Right ventricle myocardium superior (tissue), 1 donor: ENCODE measurements at regions of chr3 and their contacts with region 1.

Region 1: DNA sequence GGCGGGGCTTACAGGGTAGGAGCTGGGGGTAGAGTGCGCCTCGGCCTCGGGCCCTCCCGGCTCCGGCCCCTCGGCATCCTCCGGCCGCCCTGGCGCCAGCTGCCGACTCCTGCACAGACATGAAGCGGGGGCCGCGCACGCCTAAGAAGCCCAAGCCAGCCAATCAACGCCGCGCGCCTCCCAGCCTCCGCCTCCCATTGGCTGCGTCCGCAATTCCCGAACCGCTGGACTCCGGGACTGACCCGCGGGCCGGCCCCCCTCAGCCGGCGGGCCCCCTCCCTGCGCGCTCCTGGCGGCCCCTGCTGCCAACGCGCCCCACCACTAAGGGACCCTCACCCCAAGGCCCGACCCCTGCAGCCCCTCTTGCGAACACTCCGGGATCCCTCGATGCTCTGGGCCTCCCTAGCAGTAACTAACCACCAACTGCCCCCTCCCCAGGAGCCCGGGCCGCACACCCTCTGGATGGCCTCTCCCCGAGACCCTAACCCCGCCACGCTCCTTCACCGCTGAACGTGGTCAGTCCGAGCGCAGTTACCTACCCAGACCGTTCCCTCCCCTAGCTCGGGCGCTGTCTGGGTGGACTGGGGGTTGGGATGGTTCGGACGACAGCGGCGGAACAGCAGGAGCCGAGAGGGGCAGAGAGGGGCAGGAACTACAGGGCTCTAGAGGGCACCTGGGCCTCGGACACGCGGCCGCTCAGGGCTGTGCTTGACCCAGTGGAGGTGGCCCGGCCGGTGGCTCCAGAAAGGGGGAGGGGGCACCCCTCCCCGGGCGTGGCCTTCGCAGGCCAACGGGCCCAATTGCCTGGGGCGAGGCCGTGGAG is 5.0 kb downstream of the GATA2 start:
- DNase-seq: peak; percentile 93
- ATAC-seq: peak; percentile 88

Region 2: DNA sequence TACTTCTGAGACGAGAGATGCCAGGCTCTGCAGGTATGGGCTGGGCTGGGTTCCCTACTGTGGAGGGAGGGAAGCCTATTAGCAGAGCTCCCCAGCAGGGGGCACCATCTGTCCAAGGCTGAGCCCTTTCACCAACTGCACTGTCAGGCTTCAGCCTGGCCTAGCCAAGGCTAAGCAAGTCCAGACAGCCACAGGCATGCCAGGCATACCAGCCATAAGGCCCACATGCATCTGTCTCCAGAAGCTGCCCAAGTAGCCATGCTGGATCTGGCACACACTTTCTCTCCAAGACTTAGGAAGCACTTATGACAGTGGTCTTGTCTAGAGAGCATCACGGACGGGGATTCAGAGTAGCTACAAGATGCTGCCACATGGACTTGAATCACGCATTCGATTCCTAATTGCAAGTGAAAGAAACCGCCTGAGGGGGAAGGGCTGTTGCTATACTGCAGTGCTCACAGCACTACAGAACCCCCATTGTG is 392.8 kb before region 1 on chr3:
- intact Hi-C with region 1: no loop called
- DNase-seq: peak; percentile 90
- ATAC-seq: peak; percentile 99

Region 3: DNA sequence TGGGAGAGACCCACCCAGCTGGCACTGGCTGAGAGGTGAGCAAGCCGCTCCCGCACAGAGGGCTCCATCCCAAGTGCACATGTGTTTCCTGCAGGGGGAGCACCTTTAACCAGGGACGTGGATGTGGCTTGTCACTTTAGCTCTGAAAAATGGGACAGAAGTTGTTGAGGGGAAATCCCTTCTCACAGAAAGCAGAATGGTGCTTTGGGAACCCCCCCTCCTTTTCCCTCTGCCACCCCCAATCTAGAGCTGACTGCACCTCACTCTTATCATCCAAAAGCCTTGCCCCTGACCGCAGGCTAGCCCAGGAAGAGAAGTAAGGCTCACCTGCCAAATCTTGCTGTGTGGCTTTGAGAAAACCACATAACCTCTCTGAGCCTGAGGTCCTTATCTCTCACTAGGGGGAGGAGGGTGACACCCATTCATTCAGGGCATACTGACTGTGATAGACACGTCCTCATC is 84.7 kb after region 1 on chr3:
- intact Hi-C with region 1: loop called (anchors 10 kb)
- DNase-seq: no peak
- ATAC-seq: no peak